Mammary epithelial cell (primary cell): ENCODE measurements at regions of chr5 and their contacts with region 1.

Region 1: DNA sequence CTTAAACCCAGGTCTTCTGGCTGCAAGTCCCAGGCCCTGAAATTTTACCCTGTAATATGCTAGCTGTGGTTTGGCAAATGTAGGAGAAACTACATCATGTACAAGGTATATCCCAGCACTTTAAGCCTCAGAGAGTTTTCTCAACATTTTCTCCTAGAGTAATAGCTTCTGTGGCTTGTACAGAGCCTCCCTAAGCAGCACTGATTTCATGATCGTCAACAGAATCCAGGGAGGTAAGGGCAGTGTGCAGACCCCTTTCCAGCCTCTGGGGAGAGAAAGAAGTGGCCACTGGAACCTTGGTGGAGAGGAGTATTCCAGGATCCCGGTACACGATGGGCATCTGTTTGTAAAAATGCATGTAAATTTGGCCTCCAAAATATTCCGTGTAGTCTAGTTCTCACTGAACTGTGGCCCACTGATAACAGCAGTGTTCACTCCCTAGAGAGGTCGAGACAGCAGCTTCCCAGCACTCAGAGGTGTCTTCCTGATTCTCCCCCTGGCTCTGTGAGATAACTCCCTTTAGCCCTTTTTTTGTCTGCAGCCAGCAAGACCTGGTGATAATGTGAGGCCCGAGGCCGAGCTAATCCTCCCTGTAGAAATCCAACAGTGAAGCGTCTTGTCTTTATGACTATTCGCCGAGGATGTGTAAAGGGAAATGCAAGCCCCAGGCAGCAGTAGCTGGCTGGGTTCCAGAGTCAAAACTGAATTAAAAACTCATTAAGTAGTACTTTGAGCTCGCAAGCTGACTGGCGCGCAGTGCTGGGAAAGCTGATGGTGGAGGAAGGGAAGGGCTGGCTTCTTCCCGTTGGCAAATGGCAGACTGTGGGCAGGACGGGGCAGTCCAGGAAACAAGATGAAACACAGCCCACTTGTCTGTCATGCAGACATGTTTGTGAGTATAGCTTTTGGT is 59.0 kb downstream of the MAP1B start:
- DNase-seq: peak; percentile 83
- H3K4me3 ChIP-seq: peak overlapping the region in 1 of 3 experiments; percentile 2
- H3K27ac ChIP-seq: no peak overlapping the region
- H3K4me1 ChIP-seq: peaks cover 15% of the 10 kb centered on the region
- H3K27me3 ChIP-seq: no peaks in the 10 kb centered on the region
- CTCF ChIP-seq: no peak

Region 2: DNA sequence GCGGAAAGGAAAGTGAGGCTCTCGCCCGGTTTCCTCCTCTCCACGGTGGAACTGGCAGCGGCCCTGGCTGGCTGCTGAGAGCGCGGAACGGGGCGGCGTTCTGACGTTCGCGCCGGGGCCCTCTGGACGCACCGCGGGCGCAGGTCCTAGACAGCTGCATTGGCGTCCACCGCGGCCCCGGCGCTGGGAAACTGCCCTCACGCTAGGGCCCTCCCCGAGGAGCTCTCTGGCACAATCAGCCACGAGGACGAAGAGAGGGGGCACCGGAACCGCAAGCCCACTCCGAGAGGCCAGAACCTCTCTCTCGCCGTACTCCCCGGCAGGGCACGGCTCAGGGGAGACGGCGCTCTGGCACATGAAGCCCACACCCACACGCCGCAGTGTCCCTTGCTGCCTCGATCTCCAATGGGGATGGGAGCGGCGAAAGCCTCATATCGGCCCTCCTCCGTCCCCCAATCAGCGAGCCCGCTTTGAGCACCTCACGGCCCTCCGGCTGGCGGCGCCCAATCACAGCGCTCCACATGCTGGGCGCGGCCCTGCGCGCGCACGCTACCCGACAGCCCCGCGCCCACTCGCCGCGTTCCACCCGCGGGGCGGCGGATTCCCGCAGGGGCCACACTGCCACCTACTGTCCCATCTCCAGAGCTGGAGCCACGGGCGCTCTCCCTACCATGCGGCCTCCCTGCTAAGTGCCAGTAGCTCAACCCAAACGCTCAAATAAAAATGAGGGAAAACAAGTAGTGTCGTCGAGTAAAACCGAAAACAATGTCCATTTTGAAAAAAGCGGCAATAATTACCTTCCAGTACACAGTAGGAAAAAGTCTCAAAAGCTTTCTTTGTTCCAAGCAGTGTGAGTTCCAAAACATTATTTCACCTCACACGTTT is 141.9 kb after region 1 on chr5:
- CTCF ChIA-PET with region 1: interaction called, 18 read pairs
- dilution Hi-C with region 1: no loop called
- in situ Hi-C with region 1: no loop called
- intact Hi-C with region 1: no loop called
- DNase-seq: peak; percentile 97
- H3K4me3 ChIP-seq: peak overlapping the region; percentile 64 to 99 (median 72)
- H3K27ac ChIP-seq: peak overlapping the region; percentile 78
- H3K4me1 ChIP-seq: peaks cover 16% of the 10 kb centered on the region
- H3K27me3 ChIP-seq: no peaks in the 10 kb centered on the region
- CTCF ChIP-seq: peak; percentile 60 to 81